Activated B cell treated with CpG ODN at 0.5 μM for 24 hours (primary cell): ENCODE measurements at regions of chr6 and their contacts with region 1.

Region 1: GRCh38 chr6:8102122-8102958 is at the start of gene EEF1E1:
- DNase-seq: peak; percentile 80
- ATAC-seq: peak; percentile 98
- H3K4me3 Mint-ChIP-seq: peak within 1 kb of the TSS; percentile 97
- H3K27ac Mint-ChIP-seq: peak within 1 kb of the TSS; percentile 93
- H3K4me1 Mint-ChIP-seq: peaks cover 25% of the 10 kb centered on the region
- H3K27me3 Mint-ChIP-seq: peaks cover 14% of the 10 kb centered on the region
- CTCF ChIP-seq: no peak
- total RNA-seq, gene EEF1E1: 32.5 and 33.0 TPM in 2 replicates

Region 2: GRCh38 chr6:6556738-6557505 is 1545.4 kb before region 1 on chr6:
- CTCF ChIA-PET with region 1: no interaction called
- POLR2A ChIA-PET with region 1: no interaction called
- intact Hi-C with region 1: no loop called
- DNase-seq: peak; percentile 28
- ATAC-seq: peak; percentile 81
- H3K4me3 Mint-ChIP-seq: no peak overlapping the region
- H3K27ac Mint-ChIP-seq: no peak overlapping the region
- H3K4me1 Mint-ChIP-seq: peaks cover 3% of the 10 kb centered on the region
- H3K27me3 Mint-ChIP-seq: no peaks in the 10 kb centered on the region
- CTCF ChIP-seq: peak; percentile 83

Region 3: DNA sequence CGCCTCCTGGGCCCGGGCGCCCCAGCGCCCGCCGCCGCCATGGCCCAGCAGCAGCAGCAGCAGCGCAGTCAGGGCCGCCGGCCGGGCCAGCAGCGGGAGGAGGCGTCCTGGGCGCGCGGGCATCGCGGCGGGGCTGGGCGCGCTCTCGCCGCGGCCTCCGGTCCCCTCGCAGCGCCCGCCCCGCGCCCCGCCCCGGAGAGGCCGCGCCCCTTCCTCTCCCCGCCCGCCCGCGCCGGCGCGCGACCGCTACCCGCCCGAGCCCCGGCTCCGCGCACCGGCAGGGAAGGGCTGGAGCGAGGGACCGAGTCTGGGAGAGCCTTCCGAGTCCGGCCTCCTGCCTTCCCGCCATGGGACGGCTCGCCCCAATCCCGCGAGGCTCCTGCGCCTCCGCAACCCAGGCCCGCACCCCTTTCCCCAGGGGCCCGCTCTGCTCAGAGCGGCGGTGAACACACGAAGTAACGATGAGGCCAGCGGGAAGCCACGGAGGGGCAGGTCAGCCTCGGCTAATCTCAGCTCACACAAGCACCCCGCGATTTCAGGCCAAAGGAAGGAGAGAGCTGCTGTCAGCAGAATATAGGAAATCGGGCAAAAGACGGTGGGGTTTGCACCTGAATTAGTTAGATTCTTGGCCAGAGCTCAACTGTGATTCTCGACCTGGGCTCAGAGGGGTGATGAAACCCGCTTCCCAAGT is 191.5 kb before region 1 on chr6 and contains the start of gene TXNDC5:
- CTCF ChIA-PET with region 1: no interaction called
- POLR2A ChIA-PET with region 1: no interaction called
- intact Hi-C with region 1: loop called (anchors 2 kb)
- DNase-seq: peak; percentile 78
- ATAC-seq: peak; percentile 79
- H3K4me3 Mint-ChIP-seq: peak within 1 kb of the TSS; percentile 85
- H3K27ac Mint-ChIP-seq: peak within 1 kb of the TSS; percentile 83
- H3K4me1 Mint-ChIP-seq: peaks cover 26% of the 10 kb centered on the region
- H3K27me3 Mint-ChIP-seq: no peaks in the 10 kb centered on the region
- CTCF ChIP-seq: no peak
- total RNA-seq, gene TXNDC5: 68.2 TPM in 2 replicates